ENCODE measurements at regions of chr5 and their contacts with region 1.

Region 1: GRCh38 chr5:75681125-75681830 is 36.0 kb downstream of the POC5 start:
- DNase-seq: no peak
- H3K4me3 ChIP-seq: peak overlapping the region in 1 of 4 donors; percentile 36
- H3K27ac ChIP-seq: no peak overlapping the region
- H3K4me1 ChIP-seq: peaks cover 0 to 17% of the 10 kb centered on the region in 2 donors
- H3K27me3 ChIP-seq: no peaks in the 10 kb centered on the region
- CTCF ChIP-seq: peak; percentile 66 to 89 (median 82)
- POLR2A ChIP-seq: no peak

Region 2: GRCh38 chr5:75405296-75405695 is 276.0 kb before region 1 on chr5:
- intact Hi-C with region 1: loop called in 1 of 2 experiments (anchors 10 kb)
- DNase-seq: no peak
- H3K4me3 ChIP-seq: no peak overlapping the region
- H3K27ac ChIP-seq: no peak overlapping the region
- H3K4me1 ChIP-seq: no peaks in the 10 kb centered on the region
- H3K27me3 ChIP-seq: no peaks in the 10 kb centered on the region
- CTCF ChIP-seq: no peak
- POLR2A ChIP-seq: no peak

Region 3: GRCh38 chr5:75426215-75426614 is 255.1 kb before region 1 on chr5:
- intact Hi-C with region 1: no loop called
- DNase-seq: no peak
- H3K4me3 ChIP-seq: no peak overlapping the region
- H3K27ac ChIP-seq: no peak overlapping the region
- H3K4me1 ChIP-seq: no peaks in the 10 kb centered on the region
- H3K27me3 ChIP-seq: no peaks in the 10 kb centered on the region
- CTCF ChIP-seq: no peak
- POLR2A ChIP-seq: no peak

Measured in adrenal gland (tissue), 19 donors.